Common myeloid progenitor, CD34-positive (primary cell): ENCODE measurements at regions of chr12 and their contacts with region 1.

Region 1: GRCh38 chr12:66188584-66189485 is at the start of gene IRAK3:
- DNase-seq: peak; percentile 72 to 92 (median 87)
- H3K4me3 ChIP-seq: peak within 1 kb of the TSS; percentile 47 to 94 (median 75)
- H3K27ac ChIP-seq: peak within 1 kb of the TSS; percentile 71 to 84
- H3K4me1 ChIP-seq: peaks cover 23 to 42% (median 33%) of the 10 kb centered on the region in 4 experiments
- H3K27me3 ChIP-seq: no peaks in the 10 kb centered on the region

Region 2: GRCh38 chr12:66144791-66145754 is 43.8 kb before region 1 on chr12:
- CTCF ChIA-PET with region 1: interaction called, 10 read pairs
- POLR2A ChIA-PET with region 1: no interaction called
- DNase-seq: peak; percentile 90 to 95 (median 93)
- H3K4me3 ChIP-seq: peak overlapping the region in 6 of 7 experiments; percentile 15 to 63 (median 34)
- H3K27ac ChIP-seq: peak overlapping the region; percentile 78 to 90
- H3K4me1 ChIP-seq: peaks cover 16 to 40% (median 25%) of the 10 kb centered on the region in 4 experiments
- H3K27me3 ChIP-seq: no peaks in the 10 kb centered on the region

Region 3: GRCh38 chr12:66203820-66204219 is 15.0 kb after region 1 on chr12:
- CTCF ChIA-PET with region 1: interaction called, 11 read pairs
- POLR2A ChIA-PET with region 1: interaction called, 3 read pairs
- DNase-seq: peak in 2 of 3 donors; percentile 59 to 64
- H3K4me3 ChIP-seq: no peak overlapping the region
- H3K27ac ChIP-seq: no peak overlapping the region
- H3K4me1 ChIP-seq: peaks cover 0 to 4% (median 0%) of the 10 kb centered on the region in 4 experiments
- H3K27me3 ChIP-seq: no peaks in the 10 kb centered on the region